ENCODE measurements at regions of chr4 and their contacts with region 1.

Region 1: GRCh38 chr4:76485450-76485849 is 50.4 kb downstream of the SHROOM3 start:
- DNase-seq: no peak
- ATAC-seq: peak in 1 of 8 donors; percentile 42
- H3K4me3 ChIP-seq: no peak overlapping the region
- H3K27ac ChIP-seq: no peak overlapping the region
- H3K4me1 ChIP-seq: peaks cover 0 to 7% (median 0%) of the 10 kb centered on the region in 9 donors
- H3K27me3 ChIP-seq: no peaks in the 10 kb centered on the region
- CTCF ChIP-seq: no peak

Region 2: DNA sequence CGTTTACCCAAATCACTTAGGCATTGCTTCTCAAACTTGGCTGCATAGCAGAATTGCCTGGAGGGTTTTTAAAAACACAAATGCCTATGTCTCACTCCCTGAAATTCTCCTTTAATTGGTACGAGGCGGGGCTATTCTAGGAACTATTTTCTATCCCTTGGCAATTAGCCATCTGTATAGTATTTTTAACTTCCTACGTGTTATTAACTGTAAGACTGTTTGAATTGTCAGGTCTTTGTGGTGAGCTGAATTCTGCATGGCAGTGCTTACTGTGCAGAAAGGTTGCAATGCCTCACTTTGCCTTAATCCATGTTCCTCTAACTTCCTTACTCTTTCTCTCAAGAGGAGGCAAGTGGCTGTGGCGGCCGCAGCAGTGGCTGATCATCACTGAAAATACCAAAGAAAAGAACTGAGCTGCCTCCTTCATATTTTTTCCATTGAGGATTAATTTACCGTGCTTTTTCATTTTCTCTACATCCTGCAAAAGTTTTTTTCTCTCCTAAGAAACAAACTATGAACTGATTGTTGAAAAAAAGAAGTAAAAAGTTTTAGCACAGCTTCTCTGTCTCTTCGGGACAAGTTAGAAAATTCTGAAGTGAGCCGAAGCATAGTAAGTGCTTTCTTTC is 50.4 kb before region 1 on chr4 and contains the start of gene SHROOM3:
- intact Hi-C with region 1: no loop called
- DNase-seq: no peak
- ATAC-seq: peak in 6 of 8 donors; percentile 45 to 53 (median 48)
- H3K4me3 ChIP-seq: peak within 1 kb of the TSS; percentile 1 to 52 (median 28)
- H3K27ac ChIP-seq: peak within 1 kb of the TSS in 7 of 10 donors; percentile 1 to 57 (median 20)
- H3K4me1 ChIP-seq: peaks cover 0 to 16% (median 0%) of the 10 kb centered on the region in 9 donors
- H3K27me3 ChIP-seq: peaks cover 0 to 28% (median 11%) of the 10 kb centered on the region in 7 donors
- CTCF ChIP-seq: no peak
- total RNA-seq, gene SHROOM3: 9.5 to 33.3 (median 19.6) TPM

Region 3: GRCh38 chr4:76447393-76447851 is 38.0 kb before region 1 on chr4:
- intact Hi-C with region 1: loop called in 1 of 10 experiments (anchors 5 kb)
- DNase-seq: no peak
- ATAC-seq: no peak
- H3K4me3 ChIP-seq: no peak overlapping the region
- H3K27ac ChIP-seq: no peak overlapping the region
- H3K4me1 ChIP-seq: peaks cover 0 to 14% (median 5%) of the 10 kb centered on the region in 9 donors
- H3K27me3 ChIP-seq: no peaks in the 10 kb centered on the region
- CTCF ChIP-seq: no peak

Region 4: DNA sequence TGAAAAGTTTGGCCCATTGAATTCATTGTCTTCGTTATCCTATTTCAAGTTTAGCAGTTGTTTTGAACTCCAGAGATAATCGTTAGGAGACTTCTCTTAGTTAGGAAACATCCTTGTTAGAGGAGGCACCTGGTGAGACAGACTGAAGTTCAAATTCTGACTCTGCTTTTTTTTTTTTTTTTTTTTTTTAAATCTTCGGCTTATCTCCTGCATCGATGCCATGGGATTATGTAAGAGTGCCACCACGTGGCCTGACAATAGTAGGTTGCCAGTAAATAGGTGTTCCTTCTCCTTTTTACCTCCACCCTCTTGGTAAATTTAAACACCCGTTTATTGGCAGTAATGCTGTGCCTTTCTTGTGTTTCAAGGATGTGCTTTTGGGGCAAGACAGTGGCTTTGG is 263.2 kb after region 1 on chr4:
- intact Hi-C with region 1: no loop called
- DNase-seq: no peak
- ATAC-seq: no peak
- H3K4me3 ChIP-seq: no peak overlapping the region
- H3K27ac ChIP-seq: no peak overlapping the region
- H3K4me1 ChIP-seq: peaks cover 0 to 20% (median 9%) of the 10 kb centered on the region in 9 donors
- H3K27me3 ChIP-seq: peaks cover 0 to 4% (median 0%) of the 10 kb centered on the region in 7 donors
- CTCF ChIP-seq: peak in 3 of 9 donors; percentile 16 to 21 (median 20)

Region 5: GRCh38 chr4:77183777-77184420 is 698.4 kb after region 1 on chr4:
- intact Hi-C with region 1: loop called in 1 of 10 experiments (anchors 5 kb)
- DNase-seq: no peak
- ATAC-seq: peak in 1 of 8 donors; percentile 17
- H3K4me3 ChIP-seq: no peak overlapping the region
- H3K27ac ChIP-seq: peak overlapping the region in 3 of 10 donors; percentile 13 to 40 (median 17)
- H3K4me1 ChIP-seq: peaks cover 0 to 14% (median 4%) of the 10 kb centered on the region in 9 donors
- H3K27me3 ChIP-seq: no peaks in the 10 kb centered on the region
- CTCF ChIP-seq: no peak

Measured in heart right ventricle (tissue), 16 donors.